ENCODE measurements at regions of chr10 and their contacts with region 1.

Region 1: DNA sequence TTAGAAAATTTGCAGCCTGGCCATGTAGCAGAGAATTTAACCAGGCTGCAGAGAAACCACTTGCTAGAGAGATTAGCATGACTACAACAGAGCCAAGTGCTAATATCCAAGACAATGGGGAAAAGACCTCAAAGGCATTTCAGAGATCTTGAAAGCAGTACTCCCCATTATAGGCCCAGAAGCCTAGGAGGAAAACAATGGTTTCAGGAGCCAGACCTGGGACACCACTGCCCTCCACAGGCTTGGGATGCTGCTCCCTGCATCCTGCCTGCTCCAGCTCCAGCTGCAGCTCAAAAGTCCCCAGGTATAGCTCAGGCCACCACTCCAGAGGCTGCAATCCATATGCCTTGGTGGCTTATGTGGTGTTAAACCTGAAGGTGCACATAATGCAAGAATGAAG is 101.5 kb upstream of the TMEM72 start:
- DNase-seq: no peak
- ATAC-seq: no peak
- H3K4me3 ChIP-seq: no peak overlapping the region
- H3K27ac ChIP-seq: no peak overlapping the region
- H3K4me1 ChIP-seq: no peaks in the 10 kb centered on the region
- H3K27me3 ChIP-seq: no peaks in the 10 kb centered on the region

Region 2: GRCh38 chr10:44552726-44553125 is 256.9 kb before region 1 on chr10:
- intact Hi-C with region 1: no loop called
- DNase-seq: no peak
- ATAC-seq: no peak
- H3K4me3 ChIP-seq: no peak overlapping the region
- H3K27ac ChIP-seq: no peak overlapping the region
- H3K4me1 ChIP-seq: no peaks in the 10 kb centered on the region
- H3K27me3 ChIP-seq: no peaks in the 10 kb centered on the region

Region 3: DNA sequence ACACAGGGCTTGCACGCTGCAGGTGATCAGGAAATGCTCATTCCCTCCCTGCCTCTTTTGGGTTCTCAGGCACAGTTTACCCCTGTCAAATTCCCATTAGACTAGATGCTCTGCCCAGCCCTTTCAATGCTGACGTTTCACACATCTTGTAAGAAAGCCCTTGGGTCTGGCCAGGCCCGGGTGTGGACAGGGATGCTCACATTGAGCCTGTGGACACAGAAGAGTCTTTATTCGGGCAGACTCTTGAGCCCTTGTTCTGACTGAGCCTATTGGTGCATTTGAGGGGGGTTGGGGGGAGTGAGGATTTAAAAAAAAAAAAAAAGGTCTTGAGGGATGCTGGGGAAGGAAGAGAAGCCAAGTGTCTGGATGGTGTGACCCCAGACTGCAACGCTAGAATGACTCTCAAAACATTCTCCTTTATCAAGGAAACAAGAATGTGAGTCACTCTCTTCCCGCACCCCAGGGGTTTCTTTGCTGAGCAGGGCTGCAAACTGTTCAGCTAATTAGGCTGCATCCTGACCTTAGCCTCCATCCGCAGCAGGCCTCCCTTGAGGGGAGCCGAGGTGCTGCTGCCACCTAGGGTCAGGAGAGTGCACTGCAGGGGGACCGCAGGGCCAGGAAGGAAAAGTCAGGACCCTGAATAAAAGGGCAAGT is 47.8 kb after region 1 on chr10:
- intact Hi-C with region 1: loop called in 1 of 2 experiments (anchors 5 kb)
- DNase-seq: peak; percentile 75 to 85
- ATAC-seq: peak; percentile 81
- H3K4me3 ChIP-seq: no peak overlapping the region
- H3K27ac ChIP-seq: no peak overlapping the region
- H3K4me1 ChIP-seq: no peaks in the 10 kb centered on the region
- H3K27me3 ChIP-seq: no peaks in the 10 kb centered on the region